ENCODE measurements at regions of chr15 and their contacts with region 1.

Region 1: DNA sequence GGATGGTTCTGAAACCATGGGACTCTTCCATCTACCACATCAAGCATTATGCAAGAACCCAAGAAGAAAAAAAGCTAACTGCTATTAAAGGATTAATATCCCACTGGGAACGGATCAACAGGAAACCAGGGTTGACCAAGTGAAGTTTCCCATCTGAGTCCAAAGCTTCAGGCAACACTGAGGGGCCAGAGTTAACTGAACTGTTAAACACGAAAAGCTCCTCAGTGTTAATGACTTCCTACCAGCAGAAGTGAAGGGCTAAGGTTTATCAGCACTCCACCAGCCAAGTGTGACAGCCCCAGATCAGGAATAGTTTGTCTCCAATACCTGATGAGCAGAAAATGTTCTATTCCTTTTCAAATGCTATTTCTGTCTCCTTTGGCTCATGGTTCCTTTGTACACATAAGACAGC is 36.7 kb downstream of the PTPN9 start:
- DNase-seq: no peak
- H3K4me3 ChIP-seq: no peak overlapping the region
- H3K27ac ChIP-seq: no peak overlapping the region
- H3K4me1 ChIP-seq: peaks cover 12% of the 10 kb centered on the region
- H3K27me3 ChIP-seq: no peaks in the 10 kb centered on the region
- CTCF ChIP-seq: no peak

Region 2: DNA sequence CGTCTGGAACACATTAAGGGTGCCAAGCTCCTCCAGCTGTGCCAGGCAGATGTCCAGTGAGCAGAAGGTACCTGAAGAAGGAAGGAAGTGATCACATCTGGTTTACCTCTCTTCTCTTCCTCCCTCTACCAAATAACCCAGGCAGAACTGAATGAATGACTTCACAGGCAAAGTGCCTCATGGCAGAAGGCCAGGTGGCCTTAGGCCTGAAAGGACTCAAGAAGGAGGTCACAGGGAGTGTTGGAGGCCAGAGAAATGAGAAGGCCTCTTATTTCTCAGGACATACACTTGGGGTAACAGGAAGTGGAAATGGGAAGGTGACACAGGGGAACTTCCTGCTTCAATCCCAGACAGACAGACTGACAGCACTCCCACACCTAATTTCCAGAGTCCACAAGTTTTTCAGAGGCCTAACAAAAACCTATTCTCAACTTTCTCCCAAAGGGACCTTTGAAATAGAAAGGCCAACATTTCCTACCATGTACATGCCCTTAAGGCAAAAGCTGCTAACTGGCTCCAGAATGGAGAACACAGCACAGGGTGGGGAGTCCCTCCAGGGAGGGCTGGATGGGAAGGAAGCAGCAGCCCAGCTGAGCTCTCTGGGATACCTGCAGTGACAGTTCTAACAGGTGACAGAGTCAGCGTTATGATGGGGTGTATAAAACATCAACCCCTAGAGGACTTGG is 73.3 kb before region 1 on chr15:
- CTCF ChIA-PET with region 1: no interaction called
- dilution Hi-C with region 1: loop called (anchors 5 kb)
- in situ Hi-C with region 1: no loop called
- intact Hi-C with region 1: no loop called
- DNase-seq: no peak
- H3K4me3 ChIP-seq: no peak overlapping the region
- H3K27ac ChIP-seq: no peak overlapping the region
- H3K4me1 ChIP-seq: no peaks in the 10 kb centered on the region
- H3K27me3 ChIP-seq: no peaks in the 10 kb centered on the region
- CTCF ChIP-seq: no peak

Region 3: DNA sequence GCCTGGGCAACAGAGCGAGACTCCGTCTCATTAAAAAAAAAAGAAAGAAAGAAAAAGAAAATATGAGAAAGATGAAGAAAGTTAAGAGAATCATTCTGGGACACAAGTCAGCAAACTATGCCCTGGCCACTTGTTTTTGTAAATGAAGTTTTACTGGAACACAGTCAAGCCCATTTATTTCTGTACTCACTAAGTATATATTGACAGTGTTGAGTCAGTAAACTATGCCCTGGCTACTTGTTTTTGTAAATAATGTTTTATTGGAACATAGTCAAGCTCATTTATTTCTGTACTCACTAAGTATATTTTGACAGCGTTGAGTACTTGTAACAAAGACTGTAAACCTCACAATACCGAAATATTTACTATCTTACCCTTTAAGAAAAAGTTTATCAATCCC is 48.7 kb before region 1 on chr15:
- CTCF ChIA-PET with region 1: no interaction called
- dilution Hi-C with region 1: no loop called
- in situ Hi-C with region 1: no loop called
- intact Hi-C with region 1: no loop called
- DNase-seq: no peak
- H3K4me3 ChIP-seq: no peak overlapping the region
- H3K27ac ChIP-seq: no peak overlapping the region
- H3K4me1 ChIP-seq: peaks cover 6% of the 10 kb centered on the region
- H3K27me3 ChIP-seq: no peaks in the 10 kb centered on the region
- CTCF ChIP-seq: no peak

Region 4: DNA sequence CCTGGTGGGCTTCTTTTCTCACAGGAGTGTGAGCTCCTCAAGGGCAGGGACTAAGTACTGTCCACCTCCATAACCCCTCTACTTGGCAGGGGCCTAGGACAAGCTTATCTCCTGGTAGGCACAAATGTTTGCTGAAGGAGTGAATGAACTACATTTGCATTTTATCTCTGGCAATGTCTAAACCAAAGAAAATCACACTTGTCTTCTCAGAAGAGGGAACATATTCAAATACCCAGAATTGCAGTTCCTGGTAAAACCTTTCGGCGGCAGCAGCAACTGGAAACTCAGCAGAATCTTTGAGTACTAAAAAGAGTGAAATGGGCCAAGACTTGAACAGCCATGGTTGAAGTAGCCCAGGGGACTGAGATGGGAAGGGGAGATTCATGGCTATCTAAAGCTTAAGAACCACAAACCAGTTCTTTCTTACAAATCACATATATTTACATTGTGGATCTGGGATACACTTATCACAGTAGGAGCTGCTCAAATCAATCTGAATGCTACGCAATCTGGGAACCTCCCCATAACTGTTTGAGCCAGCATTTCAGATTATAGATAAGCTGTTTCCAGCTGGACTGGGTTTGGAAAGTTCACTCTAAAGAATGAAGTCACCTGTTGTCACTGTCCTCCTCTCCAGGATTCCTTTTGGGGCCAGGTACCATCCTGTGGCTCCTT is 55.4 kb after region 1 on chr15:
- CTCF ChIA-PET with region 1: no interaction called
- dilution Hi-C with region 1: loop called (anchors 5 kb)
- in situ Hi-C with region 1: no loop called
- intact Hi-C with region 1: no loop called
- DNase-seq: no peak
- H3K4me3 ChIP-seq: no peak overlapping the region
- H3K27ac ChIP-seq: no peak overlapping the region
- H3K4me1 ChIP-seq: no peaks in the 10 kb centered on the region
- H3K27me3 ChIP-seq: no peaks in the 10 kb centered on the region
- CTCF ChIP-seq: peak; percentile 28 to 43